Mammary epithelial cell (primary cell): ENCODE measurements at regions of chr16 and their contacts with region 1.

Region 1: DNA sequence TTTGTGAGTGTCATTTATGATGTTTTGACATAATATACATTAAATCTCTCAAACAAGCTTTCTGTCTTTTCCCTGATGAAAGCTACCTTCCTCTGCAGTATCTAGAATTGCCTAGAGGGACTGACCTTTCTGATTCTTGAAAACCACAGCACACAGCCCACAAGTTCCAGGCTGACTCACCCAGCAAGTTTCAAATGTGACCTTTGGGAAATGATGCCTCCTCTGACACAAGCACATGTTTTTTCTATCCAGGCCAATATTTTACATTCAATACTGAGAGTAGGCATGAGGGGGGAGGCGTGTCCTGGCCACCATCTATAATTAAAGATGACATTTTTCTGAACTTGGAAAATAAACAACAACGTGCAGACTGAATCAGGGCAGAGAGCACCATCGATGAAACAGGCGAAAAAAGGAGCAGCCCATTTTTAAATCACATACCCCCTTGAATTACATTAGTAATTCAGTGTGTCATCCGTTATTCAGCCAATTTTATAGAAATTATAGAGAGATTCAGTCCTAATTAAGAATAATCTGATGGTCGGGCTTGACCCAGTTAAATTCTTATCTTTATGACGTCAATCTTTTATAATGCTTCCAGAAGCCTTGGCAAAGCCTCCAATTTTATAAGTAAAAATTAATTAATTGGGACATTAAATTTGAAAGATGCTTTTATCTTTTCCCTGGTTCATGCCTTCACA is 292.6 kb upstream of the CDH11 start:
- DNase-seq: peak; percentile 82
- H3K4me3 ChIP-seq: no peak overlapping the region
- H3K27ac ChIP-seq: no peak overlapping the region
- H3K4me1 ChIP-seq: peaks cover 40% of the 10 kb centered on the region
- H3K27me3 ChIP-seq: no peaks in the 10 kb centered on the region
- CTCF ChIP-seq: no peak

Region 2: DNA sequence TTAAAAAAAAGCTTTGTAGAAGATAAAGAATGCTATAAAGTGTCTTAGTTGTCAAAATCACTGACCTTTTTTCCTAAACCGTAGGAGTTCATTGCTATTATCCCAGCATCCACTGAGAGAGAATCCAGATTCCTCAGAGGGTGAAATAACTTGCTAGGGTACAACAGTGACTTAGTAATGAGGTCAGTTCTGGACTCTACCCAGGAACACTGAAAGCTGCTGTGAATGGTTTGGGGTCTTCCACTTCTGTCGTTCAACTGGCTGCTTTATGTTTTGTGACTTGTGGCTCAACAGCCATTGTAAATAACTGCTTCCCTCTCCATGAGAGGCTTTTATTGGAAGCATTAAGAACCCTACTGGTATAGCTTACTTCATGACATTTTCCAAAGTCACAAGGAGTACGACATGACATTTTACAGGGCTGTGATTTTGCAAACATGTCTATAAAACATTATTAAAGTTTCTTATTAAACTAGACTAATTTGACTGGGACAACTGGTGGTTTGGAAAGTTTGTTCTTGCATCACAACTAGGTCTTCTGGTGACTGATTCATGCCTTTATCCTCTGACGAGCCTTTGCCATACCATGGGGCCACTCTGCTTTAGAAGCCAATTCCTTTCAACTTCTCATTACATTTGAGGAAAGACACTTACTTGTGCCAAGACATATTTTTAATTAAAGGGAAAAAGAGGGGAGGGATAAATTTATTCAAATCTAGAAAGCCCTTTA is 200.4 kb before region 1 on chr16:
- CTCF ChIA-PET with region 1: no interaction called
- dilution Hi-C with region 1: no loop called
- in situ Hi-C with region 1: no loop called
- intact Hi-C with region 1: no loop called
- DNase-seq: no peak
- H3K4me3 ChIP-seq: no peak overlapping the region
- H3K27ac ChIP-seq: no peak overlapping the region
- H3K4me1 ChIP-seq: no peaks in the 10 kb centered on the region
- H3K27me3 ChIP-seq: no peaks in the 10 kb centered on the region
- CTCF ChIP-seq: no peak

Region 3: GRCh38 chr16:65445313-65446260 is 31.2 kb after region 1 on chr16:
- CTCF ChIA-PET with region 1: no interaction called
- dilution Hi-C with region 1: no loop called
- in situ Hi-C with region 1: no loop called
- intact Hi-C with region 1: no loop called
- DNase-seq: peak; percentile 8
- H3K4me3 ChIP-seq: no peak overlapping the region
- H3K27ac ChIP-seq: no peak overlapping the region
- H3K4me1 ChIP-seq: peaks cover 6% of the 10 kb centered on the region
- H3K27me3 ChIP-seq: no peaks in the 10 kb centered on the region
- CTCF ChIP-seq: no peak

Region 4: GRCh38 chr16:65480038-65480794 is 65.8 kb after region 1 on chr16:
- CTCF ChIA-PET with region 1: no interaction called
- dilution Hi-C with region 1: no loop called
- in situ Hi-C with region 1: no loop called
- intact Hi-C with region 1: no loop called
- DNase-seq: no peak
- H3K4me3 ChIP-seq: no peak overlapping the region
- H3K27ac ChIP-seq: no peak overlapping the region
- H3K4me1 ChIP-seq: no peaks in the 10 kb centered on the region
- H3K27me3 ChIP-seq: no peaks in the 10 kb centered on the region
- CTCF ChIP-seq: no peak

Region 5: GRCh38 chr16:65667011-65667578 is 252.7 kb after region 1 on chr16:
- CTCF ChIA-PET with region 1: no interaction called
- dilution Hi-C with region 1: no loop called
- in situ Hi-C with region 1: no loop called
- intact Hi-C with region 1: loop called (anchors 10 kb)
- DNase-seq: no peak
- H3K4me3 ChIP-seq: no peak overlapping the region
- H3K27ac ChIP-seq: no peak overlapping the region
- H3K4me1 ChIP-seq: peaks cover 19% of the 10 kb centered on the region
- H3K27me3 ChIP-seq: no peaks in the 10 kb centered on the region
- CTCF ChIP-seq: peak in 1 of 2 donors; percentile 44